ENCODE measurements at regions of chr15 and their contacts with region 1.

Region 1: GRCh38 chr15:70826634-70827033 is 27.3 kb downstream of the LARP6 start:
- DNase-seq: no peak
- H3K4me3 ChIP-seq: no peak overlapping the region
- H3K27ac ChIP-seq: peak overlapping the region in 1 of 2 experiments; percentile 56; a peak in 2 of 4 replicates
- H3K4me1 ChIP-seq: peaks cover 0 to 23% of the 10 kb centered on the region in 2 experiments; a peak in 2 of 4 replicates
- H3K27me3 ChIP-seq: no peaks in the 10 kb centered on the region
- CTCF ChIP-seq: no peak
- EP300 ChIP-seq: no peak
- RAD21 ChIP-seq: no peak

Region 2: GRCh38 chr15:69576035-69576526 is 1250.6 kb before region 1 on chr15:
- CTCF ChIA-PET with region 1: no interaction called
- POLR2A ChIA-PET with region 1: no interaction called
- DNase-seq: peak; percentile 84
- H3K4me3 ChIP-seq: no peak overlapping the region
- H3K27ac ChIP-seq: no peak overlapping the region
- H3K4me1 ChIP-seq: peaks cover 0 to 11% of the 10 kb centered on the region in 2 experiments; a peak in 1 of 4 replicates
- H3K27me3 ChIP-seq: peaks cover 8% of the 10 kb centered on the region; the same call in 1 of the 2 replicates
- CTCF ChIP-seq: peak; percentile 73
- EP300 ChIP-seq: no peak
- RAD21 ChIP-seq: peak; percentile 95

Region 3: GRCh38 chr15:70853821-70854666 is 27.4 kb after region 1 on chr15 and contains the start of gene LARP6:
- CTCF ChIA-PET with region 1: interaction called, 27 read pairs
- POLR2A ChIA-PET with region 1: no interaction called
- DNase-seq: peak; percentile 96
- H3K4me3 ChIP-seq: peak within 1 kb of the TSS; percentile 81 to 86
- H3K27ac ChIP-seq: peak within 1 kb of the TSS; percentile 86 to 97
- H3K4me1 ChIP-seq: peaks cover 16 to 24% of the 10 kb centered on the region in 2 experiments
- H3K27me3 ChIP-seq: no peaks in the 10 kb centered on the region
- CTCF ChIP-seq: no peak
- EP300 ChIP-seq: peak in 1 of 2 experiments; percentile 55; a peak in 1 of 4 replicates
- RAD21 ChIP-seq: no peak
- polyA plus RNA-seq, gene LARP6: 193 and 236 TPM in 2 replicates

Region 4: DNA sequence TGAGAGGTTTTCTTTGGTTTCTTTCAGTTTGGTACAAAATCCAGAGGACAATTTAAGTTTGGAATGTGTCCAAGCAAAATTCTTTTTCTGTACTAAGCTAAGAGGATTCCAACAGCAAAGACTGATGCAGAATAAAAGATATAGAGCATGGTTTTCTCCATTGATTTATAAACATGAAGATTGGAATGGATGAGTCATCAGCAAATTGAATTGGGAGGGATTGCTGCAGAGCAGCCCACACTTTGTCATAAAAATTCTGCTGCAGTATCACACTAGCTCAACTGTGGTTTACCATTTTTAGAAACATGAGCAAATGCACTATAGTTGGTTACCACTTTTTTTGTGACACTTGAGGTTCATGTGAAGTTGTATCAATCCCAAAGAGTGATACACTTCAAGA is 43.4 kb after region 1 on chr15:
- CTCF ChIA-PET with region 1: interaction called, 79 read pairs
- POLR2A ChIA-PET with region 1: no interaction called
- DNase-seq: peak; percentile 47
- H3K4me3 ChIP-seq: peak overlapping the region in 1 of 2 experiments; percentile 26; a peak in 1 of 4 replicates
- H3K27ac ChIP-seq: peak overlapping the region; percentile 83 to 87
- H3K4me1 ChIP-seq: peaks cover 31 to 35% of the 10 kb centered on the region in 2 experiments
- H3K27me3 ChIP-seq: no peaks in the 10 kb centered on the region
- CTCF ChIP-seq: no peak
- EP300 ChIP-seq: peak; percentile 55 to 81; a peak in 3 of 4 replicates
- RAD21 ChIP-seq: no peak